Esophagus muscularis mucosa (tissue), 4 donors: ENCODE measurements at regions of chr12 and their contacts with region 1.

Region 1: DNA sequence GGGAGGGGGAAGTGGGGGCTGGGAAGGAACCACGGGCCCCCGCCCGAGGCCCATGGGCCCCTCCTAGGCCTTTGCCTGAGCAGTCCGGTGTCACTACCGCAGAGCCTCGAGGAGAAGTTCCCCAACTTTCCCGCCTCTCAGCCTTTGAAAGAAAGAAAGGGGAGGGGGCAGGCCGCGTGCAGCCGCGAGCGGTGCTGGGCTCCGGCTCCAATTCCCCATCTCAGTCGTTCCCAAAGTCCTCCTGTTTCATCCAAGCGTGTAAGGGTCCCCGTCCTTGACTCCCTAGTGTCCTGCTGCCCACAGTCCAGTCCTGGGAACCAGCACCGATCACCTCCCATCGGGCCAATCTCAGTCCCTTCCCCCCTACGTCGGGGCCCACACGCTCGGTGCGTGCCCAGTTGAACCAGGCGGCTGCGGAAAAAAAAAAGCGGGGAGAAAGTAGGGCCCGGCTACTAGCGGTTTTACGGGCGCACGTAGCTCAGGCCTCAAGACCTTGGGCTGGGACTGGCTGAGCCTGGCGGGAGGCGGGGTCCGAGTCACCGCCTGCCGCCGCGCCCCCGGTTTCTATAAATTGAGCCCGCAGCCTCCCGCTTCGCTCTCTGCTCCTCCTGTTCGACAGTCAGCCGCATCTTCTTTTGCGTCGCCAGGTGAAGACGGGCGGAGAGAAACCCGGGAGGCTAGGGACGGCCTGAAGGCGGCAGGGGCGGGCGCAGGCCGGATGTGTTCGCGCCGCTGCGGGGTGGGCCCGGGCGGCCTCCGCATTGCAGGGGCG is at the start of gene GAPDH:
- DNase-seq: peak; percentile 97
- H3K4me3 ChIP-seq: peak within 1 kb of the TSS; percentile 76 to 98 (median 80)
- H3K27ac ChIP-seq: peak within 1 kb of the TSS; percentile 93 to 99 (median 94)
- H3K4me1 ChIP-seq: peaks cover 47 to 62% (median 60%) of the 10 kb centered on the region in 4 donors
- H3K27me3 ChIP-seq: no peaks in the 10 kb centered on the region
- CTCF ChIP-seq: no peak
- EP300 ChIP-seq: no peak
- POLR2A ChIP-seq: peak; percentile 97
- total RNA-seq, gene GAPDH: 2,279 to 3,578 (median 2,742) TPM

Region 2: DNA sequence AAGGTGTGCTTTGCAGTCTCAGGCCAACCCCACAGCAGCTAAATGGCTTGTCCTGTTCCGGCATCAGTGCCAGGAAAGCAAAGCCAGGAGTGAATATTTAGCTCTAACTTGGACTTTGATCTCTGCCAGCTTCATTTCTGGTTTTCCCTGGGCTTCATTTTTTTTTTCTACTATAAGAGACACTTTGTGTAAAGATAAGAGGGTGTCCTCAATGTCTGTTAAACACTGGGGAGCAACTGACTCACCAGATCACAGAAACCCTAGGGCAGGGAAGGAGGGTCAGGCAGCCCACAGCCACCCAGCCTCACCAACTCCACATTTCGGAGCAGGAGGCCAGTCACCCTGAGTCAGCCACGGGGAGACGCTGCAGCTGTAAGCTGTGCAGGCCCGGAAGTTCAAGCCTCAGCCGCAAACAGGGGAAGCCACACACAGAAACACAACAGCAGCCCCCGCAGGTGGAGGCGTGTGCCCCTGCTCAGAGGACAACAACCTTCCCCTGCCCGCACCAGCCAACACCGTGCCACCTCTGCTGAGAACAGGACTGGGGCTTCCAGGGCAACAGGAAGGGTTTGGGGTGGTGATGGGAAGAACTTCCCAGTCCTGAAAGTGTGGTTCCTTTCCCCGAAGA is 198.5 kb before region 1 on chr12:
- intact Hi-C with region 1: loop called (anchors 5 kb)
- DNase-seq: peak; percentile 95
- H3K4me3 ChIP-seq: peak overlapping the region; percentile 61 to 92 (median 84)
- H3K27ac ChIP-seq: peak overlapping the region; percentile 93 to 99 (median 97)
- H3K4me1 ChIP-seq: peaks cover 68 to 98% (median 96%) of the 10 kb centered on the region in 4 donors
- H3K27me3 ChIP-seq: no peaks in the 10 kb centered on the region
- CTCF ChIP-seq: peak; percentile 48 to 65 (median 56)
- EP300 ChIP-seq: peak; percentile 3
- POLR2A ChIP-seq: no peak

Region 3: DNA sequence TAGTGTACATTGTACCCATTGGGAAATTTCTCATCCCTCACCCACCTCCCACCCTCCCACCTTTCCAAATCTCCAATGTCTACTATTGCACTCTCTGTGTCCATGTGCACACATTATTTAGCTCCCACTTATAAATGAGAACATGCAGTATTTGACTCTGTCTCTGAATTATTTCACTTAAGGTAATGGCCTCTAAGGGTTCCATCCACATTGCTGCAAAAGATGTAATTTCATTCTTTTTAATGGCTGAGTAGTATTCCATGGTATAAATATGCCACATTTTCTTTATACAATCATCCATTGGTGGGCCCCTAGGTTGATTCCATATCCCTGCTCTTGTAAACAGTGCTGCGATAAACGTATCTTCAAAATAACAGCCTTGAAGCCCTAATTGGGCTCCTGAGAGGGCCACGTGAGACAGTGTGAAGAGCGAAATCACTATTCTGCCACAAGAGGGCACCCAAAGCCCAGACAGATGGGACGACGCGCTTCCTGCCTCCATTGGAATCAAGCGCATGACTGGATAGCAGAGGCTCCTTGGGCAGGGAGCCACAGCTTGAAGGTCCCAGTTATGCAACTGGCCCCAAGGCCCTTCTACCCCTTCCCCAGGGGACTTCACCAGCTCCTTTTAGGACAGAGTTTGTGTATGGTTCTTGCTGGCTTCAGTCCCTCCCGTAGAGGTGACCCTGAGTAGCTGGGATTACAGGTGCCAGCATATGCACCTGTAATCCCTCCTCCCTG is 110.7 kb before region 1 on chr12:
- intact Hi-C with region 1: loop called (anchors 5 kb)
- DNase-seq: no peak
- H3K4me3 ChIP-seq: no peak overlapping the region
- H3K27ac ChIP-seq: peak overlapping the region; percentile 10 to 73 (median 43)
- H3K4me1 ChIP-seq: peaks cover 0 to 24% (median 18%) of the 10 kb centered on the region in 4 donors
- H3K27me3 ChIP-seq: no peaks in the 10 kb centered on the region
- CTCF ChIP-seq: peak; percentile 89 to 97 (median 89)
- EP300 ChIP-seq: no peak
- POLR2A ChIP-seq: no peak

Region 4: GRCh38 chr12:6470375-6471163 is 63.5 kb before region 1 on chr12 and contains the start of gene VAMP1:
- intact Hi-C with region 1: loop called (anchors 2 kb)
- DNase-seq: peak; percentile 100
- H3K4me3 ChIP-seq: peak within 1 kb of the TSS; percentile 60 to 97 (median 84)
- H3K27ac ChIP-seq: peak within 1 kb of the TSS; percentile 87 to 94 (median 88)
- H3K4me1 ChIP-seq: peaks cover 15 to 52% (median 40%) of the 10 kb centered on the region in 4 donors
- H3K27me3 ChIP-seq: no peaks in the 10 kb centered on the region
- CTCF ChIP-seq: no peak
- EP300 ChIP-seq: no peak
- POLR2A ChIP-seq: peak; percentile 97
- total RNA-seq, gene VAMP1: 4.5 to 8.7 (median 6.7) TPM

Region 5: DNA sequence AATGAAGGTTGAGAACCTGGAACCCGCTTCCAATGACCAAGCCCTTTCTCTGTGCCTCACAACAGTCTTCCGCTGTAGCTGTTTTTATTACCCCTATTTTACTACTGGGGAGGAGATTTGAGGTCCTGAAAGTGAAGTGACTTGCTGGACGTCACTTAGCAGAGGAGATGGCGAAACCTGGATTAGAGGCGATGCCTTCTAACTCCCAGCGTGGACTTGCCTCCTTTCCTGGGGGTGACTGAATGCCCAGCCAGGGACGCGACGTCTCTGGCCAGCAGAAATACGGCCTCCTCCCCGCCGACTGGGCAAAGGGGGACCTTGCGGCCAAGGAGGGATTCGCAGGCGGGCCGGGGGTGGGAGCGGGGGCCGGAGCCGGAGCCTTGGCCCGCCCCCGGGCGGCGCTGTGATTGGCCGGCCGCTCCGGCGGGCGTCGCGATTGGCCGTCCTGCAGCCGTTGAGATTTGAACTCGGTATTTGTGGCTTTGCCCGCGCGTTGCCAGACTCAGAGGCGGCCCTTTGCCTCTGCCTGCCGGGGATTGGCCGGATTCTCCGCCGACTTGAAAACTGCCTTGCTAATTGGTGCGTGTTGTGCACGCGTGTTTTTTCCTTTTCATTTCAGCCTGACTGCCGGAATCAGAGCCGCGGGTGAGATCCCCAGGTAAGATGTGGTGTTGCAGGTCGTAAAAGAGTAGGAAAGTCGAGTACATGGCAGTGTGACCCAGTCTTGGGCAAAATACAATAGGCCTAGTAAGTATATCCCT is 40.4 kb before region 1 on chr12 and contains the start of gene NCAPD2:
- intact Hi-C with region 1: loop called (anchors 2 kb)
- DNase-seq: peak; percentile 98
- H3K4me3 ChIP-seq: peak within 1 kb of the TSS; percentile 61 to 85 (median 80)
- H3K27ac ChIP-seq: peak within 1 kb of the TSS; percentile 92 to 96 (median 96)
- H3K4me1 ChIP-seq: peaks cover 22 to 36% (median 26%) of the 10 kb centered on the region in 4 donors
- H3K27me3 ChIP-seq: no peaks in the 10 kb centered on the region
- CTCF ChIP-seq: peak; percentile 19 to 67 (median 43)
- EP300 ChIP-seq: no peak
- POLR2A ChIP-seq: peak; percentile 6
- total RNA-seq, gene NCAPD2: 13.9 to 26.1 (median 24.7) TPM